ENCODE measurements at regions of chr12 and their contacts with region 1.

Region 1: GRCh38 chr12:76878899-76879709 is at the start of gene CSRP2:
- DNase-seq: peak; percentile 93
- H3K4me3 ChIP-seq: peak within 1 kb of the TSS; percentile 55 to 75 (median 72)
- H3K27ac ChIP-seq: peak within 1 kb of the TSS; percentile 81 to 93 (median 90)
- H3K4me1 ChIP-seq: peaks cover 0 to 25% (median 18%) of the 10 kb centered on the region in 4 donors
- H3K27me3 ChIP-seq: no peaks in the 10 kb centered on the region
- CTCF ChIP-seq: peak in 1 of 4 experiments; percentile 15
- EP300 ChIP-seq: peak in 1 of 4 donors; percentile 2
- POLR2A ChIP-seq: peak; percentile 39 to 48
- total RNA-seq, gene CSRP2: 12.3 to 46.2 (median 16.5) TPM

Region 2: GRCh38 chr12:76763743-76764675 is 115.1 kb before region 1 on chr12 and contains the start of gene ZDHHC17:
- intact Hi-C with region 1: loop called (anchors 5 kb)
- DNase-seq: peak; percentile 97
- H3K4me3 ChIP-seq: peak within 1 kb of the TSS; percentile 63 to 96 (median 78)
- H3K27ac ChIP-seq: peak within 1 kb of the TSS; percentile 91 to 98 (median 96)
- H3K4me1 ChIP-seq: peaks cover 0 to 47% (median 36%) of the 10 kb centered on the region in 4 donors
- H3K27me3 ChIP-seq: no peaks in the 10 kb centered on the region
- CTCF ChIP-seq: no peak
- EP300 ChIP-seq: no peak
- POLR2A ChIP-seq: peak; percentile 46 to 50
- total RNA-seq, gene ZDHHC17: 38.6 to 54.3 (median 49.1) TPM

Region 3: GRCh38 chr12:77010691-77011548 is 131.8 kb after region 1 on chr12:
- intact Hi-C with region 1: loop called (anchors 10 kb)
- DNase-seq: peak; percentile 86
- H3K4me3 ChIP-seq: no peak overlapping the region
- H3K27ac ChIP-seq: no peak overlapping the region
- H3K4me1 ChIP-seq: peaks cover 0 to 5% (median 3%) of the 10 kb centered on the region in 4 donors
- H3K27me3 ChIP-seq: no peaks in the 10 kb centered on the region
- CTCF ChIP-seq: peak; percentile 29 to 90 (median 69)
- EP300 ChIP-seq: no peak
- POLR2A ChIP-seq: no peak

Measured in sigmoid colon (tissue), 7 donors.